Cardiac septum (tissue), 1 donor: ENCODE measurements at regions of chr6 and their contacts with region 1.

Region 1: GRCh38 chr6:110682460-110682853 is 132.8 kb downstream of the CDK19 start:
- DNase-seq: no peak

Region 2: GRCh38 chr6:110543106-110543505 is 139.4 kb before region 1 on chr6:
- intact Hi-C with region 1: loop called (anchors 5 kb)
- DNase-seq: no peak

Region 3: DNA sequence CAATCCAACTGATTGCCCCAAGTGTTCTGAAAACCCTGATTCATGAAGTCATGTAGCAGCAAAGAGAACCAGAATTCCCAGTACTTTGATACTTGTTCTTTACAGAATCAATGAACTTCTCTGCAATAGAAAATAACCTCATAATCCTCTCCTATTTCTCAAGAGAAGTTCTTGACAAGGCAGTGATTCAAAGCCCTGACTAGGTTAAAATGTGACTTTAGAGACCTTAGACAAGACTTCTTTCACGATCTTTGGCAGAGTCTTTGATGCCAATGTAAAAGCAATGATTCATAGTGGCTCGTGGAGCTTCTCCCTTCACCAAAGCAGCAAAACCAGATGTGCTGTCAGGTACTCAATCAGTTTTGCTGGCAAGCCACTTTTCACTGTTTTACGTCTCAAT is 37.6 kb after region 1 on chr6:
- intact Hi-C with region 1: no loop called
- DNase-seq: no peak

Region 4: GRCh38 chr6:110949679-110950285 is 267.3 kb after region 1 on chr6:
- intact Hi-C with region 1: loop called (anchors 2 kb)
- DNase-seq: no peak